Caco-2 (cell line): ENCODE measurements at regions of chr14 and their contacts with region 1.

Region 1: GRCh38 chr14:46444666-46445065 is 206.9 kb downstream of the RPL10L start:
- DNase-seq: no peak
- H3K4me3 ChIP-seq: no peak overlapping the region
- H3K4me3 Mint-ChIP-seq: no peak overlapping the region
- H3K27ac Mint-ChIP-seq: peak overlapping the region; percentile 59
- H3K4me1 ChIP-seq: peaks cover 35% of the 10 kb centered on the region
- H3K4me1 Mint-ChIP-seq: peaks cover 12% of the 10 kb centered on the region
- H3K27me3 ChIP-seq: no peaks in the 10 kb centered on the region
- H3K27me3 Mint-ChIP-seq: no peaks in the 10 kb centered on the region
- CTCF ChIP-seq: no peak

Region 2: GRCh38 chr14:46404865-46405811 is 39.5 kb before region 1 on chr14:
- CTCF ChIA-PET with region 1: no interaction called
- POLR2A ChIA-PET with region 1: no interaction called
- intact Hi-C with region 1: loop called (anchors 5 kb)
- DNase-seq: peak in 1 of 2 experiments; percentile 19
- H3K4me3 ChIP-seq: no peak overlapping the region
- H3K4me3 Mint-ChIP-seq: peak overlapping the region; percentile 1
- H3K27ac Mint-ChIP-seq: no peak overlapping the region
- H3K4me1 ChIP-seq: peaks cover 10% of the 10 kb centered on the region
- H3K4me1 Mint-ChIP-seq: peaks cover 7% of the 10 kb centered on the region
- H3K27me3 ChIP-seq: no peaks in the 10 kb centered on the region
- H3K27me3 Mint-ChIP-seq: no peaks in the 10 kb centered on the region
- CTCF ChIP-seq: no peak

Region 3: DNA sequence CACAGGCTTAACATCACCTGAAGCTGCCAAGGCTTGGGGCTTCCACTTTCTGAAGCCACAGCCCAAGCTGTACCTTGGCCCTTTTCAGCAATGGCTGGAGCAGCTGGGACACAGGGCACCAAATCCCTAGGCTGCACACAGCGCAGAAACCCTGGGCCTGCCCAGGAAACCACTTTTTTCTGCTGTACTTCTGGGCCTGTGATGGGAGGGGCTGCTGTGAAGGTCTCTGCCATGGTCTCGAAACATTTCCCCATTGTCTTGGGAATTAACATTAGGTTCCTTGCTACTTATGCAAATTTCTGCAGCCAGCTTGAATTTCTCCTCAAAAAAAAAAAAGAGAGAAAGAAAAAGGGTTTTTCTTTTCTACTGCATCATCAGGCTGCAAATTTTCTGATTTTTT is 12.2 kb before region 1 on chr14:
- CTCF ChIA-PET with region 1: no interaction called
- POLR2A ChIA-PET with region 1: no interaction called
- intact Hi-C with region 1: loop called (anchors 1 kb)
- DNase-seq: no peak
- H3K4me3 ChIP-seq: no peak overlapping the region
- H3K4me3 Mint-ChIP-seq: no peak overlapping the region
- H3K27ac Mint-ChIP-seq: no peak overlapping the region
- H3K4me1 ChIP-seq: no peaks in the 10 kb centered on the region
- H3K4me1 Mint-ChIP-seq: no peaks in the 10 kb centered on the region
- H3K27me3 ChIP-seq: no peaks in the 10 kb centered on the region
- H3K27me3 Mint-ChIP-seq: no peaks in the 10 kb centered on the region
- CTCF ChIP-seq: no peak

Region 4: DNA sequence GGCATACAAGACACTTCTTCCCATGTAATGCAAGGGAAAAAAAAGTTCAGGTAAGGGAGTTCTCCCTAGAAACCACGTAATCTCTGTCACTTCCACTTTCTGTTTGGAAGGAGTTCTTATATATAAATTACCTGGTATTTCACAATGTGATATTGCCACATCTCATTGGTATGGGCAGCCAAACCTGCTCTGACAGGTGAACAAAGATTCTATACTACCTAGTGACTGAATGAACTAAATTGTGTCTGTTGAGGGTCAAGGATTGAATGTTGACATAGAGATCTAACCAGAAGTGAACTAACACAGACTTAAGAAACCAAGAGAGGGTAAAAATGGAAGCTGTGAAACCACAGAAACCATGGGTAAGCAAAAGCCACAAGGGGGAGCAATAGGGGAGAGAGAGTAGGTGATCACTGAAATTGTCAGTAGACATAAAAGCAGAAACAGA is 45.6 kb after region 1 on chr14:
- CTCF ChIA-PET with region 1: no interaction called
- POLR2A ChIA-PET with region 1: no interaction called
- intact Hi-C with region 1: loop called (anchors 5 kb)
- DNase-seq: peak in 1 of 2 experiments; percentile 50
- H3K4me3 ChIP-seq: no peak overlapping the region
- H3K4me3 Mint-ChIP-seq: no peak overlapping the region
- H3K27ac Mint-ChIP-seq: no peak overlapping the region
- H3K4me1 ChIP-seq: no peaks in the 10 kb centered on the region
- H3K4me1 Mint-ChIP-seq: peaks cover 9% of the 10 kb centered on the region
- H3K27me3 ChIP-seq: no peaks in the 10 kb centered on the region
- H3K27me3 Mint-ChIP-seq: no peaks in the 10 kb centered on the region
- CTCF ChIP-seq: peak; percentile 38 to 56